CD4-positive, alpha-beta memory T cell (primary cell): ENCODE measurements at regions of chr1 and their contacts with region 1.

Region 1: GRCh38 chr1:98849969-98850636 is 154.6 kb downstream of the PLPPR5 start:
- DNase-seq: peak in 4 of 5 donors; percentile 13 to 32 (median 18)
- H3K4me3 ChIP-seq: no peak overlapping the region
- H3K4me3 Mint-ChIP-seq: peak overlapping the region in 7 of 8 donors; percentile 8 to 79 (median 51)
- H3K27ac ChIP-seq: no peak overlapping the region
- H3K27ac Mint-ChIP-seq: peak overlapping the region in 6 of 7 donors; percentile 32 to 58 (median 44)
- H3K4me1 ChIP-seq: peaks cover 31% of the 10 kb centered on the region
- H3K4me1 Mint-ChIP-seq: peaks cover 14 to 24% (median 15%) of the 10 kb centered on the region in 4 donors
- H3K27me3 ChIP-seq: no peaks in the 10 kb centered on the region
- H3K27me3 Mint-ChIP-seq: peaks cover 0 to 1% of the 10 kb centered on the region in 2 donors

Region 2: DNA sequence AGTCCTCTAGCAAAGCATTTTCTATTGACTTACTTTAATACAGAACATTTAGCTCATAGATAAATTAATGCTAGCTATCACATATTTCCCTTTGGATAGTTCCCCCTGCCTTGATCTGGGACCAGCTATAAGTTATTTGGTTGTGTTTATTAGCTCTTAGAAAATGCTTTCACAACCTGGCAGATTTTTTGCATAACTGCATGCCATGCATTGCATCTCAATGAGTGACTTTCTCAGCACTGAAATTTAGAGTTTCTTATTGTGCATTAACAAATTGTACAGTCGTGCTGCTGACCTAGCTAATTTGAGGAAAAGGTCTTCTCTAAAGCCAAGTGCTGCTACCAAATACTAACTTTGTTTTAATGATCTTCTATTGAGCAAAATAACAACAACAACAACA is 10.3 kb before region 1 on chr1:
- CTCF ChIA-PET with region 1: no interaction called
- POLR2A ChIA-PET with region 1: no interaction called
- intact Hi-C with region 1: loop called (anchors 2 kb)
- DNase-seq: no peak
- H3K4me3 ChIP-seq: no peak overlapping the region
- H3K4me3 Mint-ChIP-seq: no peak overlapping the region
- H3K27ac ChIP-seq: no peak overlapping the region
- H3K27ac Mint-ChIP-seq: no peak overlapping the region
- H3K4me1 ChIP-seq: peaks cover 8% of the 10 kb centered on the region
- H3K4me1 Mint-ChIP-seq: peaks cover 11 to 23% (median 17%) of the 10 kb centered on the region in 4 donors
- H3K27me3 ChIP-seq: no peaks in the 10 kb centered on the region
- H3K27me3 Mint-ChIP-seq: no peaks in the 10 kb centered on the region

Region 3: GRCh38 chr1:98870959-98871903 is 21.1 kb after region 1 on chr1:
- CTCF ChIA-PET with region 1: interaction called, 5 read pairs
- POLR2A ChIA-PET with region 1: interaction called, 9 read pairs
- intact Hi-C with region 1: loop called (anchors 1 kb)
- DNase-seq: peak; percentile 85 to 95 (median 91)
- H3K4me3 ChIP-seq: peak overlapping the region; percentile 12 to 62
- H3K4me3 Mint-ChIP-seq: peak overlapping the region; percentile 84 to 92 (median 86)
- H3K27ac ChIP-seq: peak overlapping the region; percentile 66
- H3K27ac Mint-ChIP-seq: peak overlapping the region; percentile 89 to 98 (median 93)
- H3K4me1 ChIP-seq: peaks cover 26% of the 10 kb centered on the region
- H3K4me1 Mint-ChIP-seq: peaks cover 19 to 49% (median 35%) of the 10 kb centered on the region in 4 donors
- H3K27me3 ChIP-seq: no peaks in the 10 kb centered on the region
- H3K27me3 Mint-ChIP-seq: no peaks in the 10 kb centered on the region